ENCODE measurements at regions of chr19 and their contacts with region 1.

Region 1: DNA sequence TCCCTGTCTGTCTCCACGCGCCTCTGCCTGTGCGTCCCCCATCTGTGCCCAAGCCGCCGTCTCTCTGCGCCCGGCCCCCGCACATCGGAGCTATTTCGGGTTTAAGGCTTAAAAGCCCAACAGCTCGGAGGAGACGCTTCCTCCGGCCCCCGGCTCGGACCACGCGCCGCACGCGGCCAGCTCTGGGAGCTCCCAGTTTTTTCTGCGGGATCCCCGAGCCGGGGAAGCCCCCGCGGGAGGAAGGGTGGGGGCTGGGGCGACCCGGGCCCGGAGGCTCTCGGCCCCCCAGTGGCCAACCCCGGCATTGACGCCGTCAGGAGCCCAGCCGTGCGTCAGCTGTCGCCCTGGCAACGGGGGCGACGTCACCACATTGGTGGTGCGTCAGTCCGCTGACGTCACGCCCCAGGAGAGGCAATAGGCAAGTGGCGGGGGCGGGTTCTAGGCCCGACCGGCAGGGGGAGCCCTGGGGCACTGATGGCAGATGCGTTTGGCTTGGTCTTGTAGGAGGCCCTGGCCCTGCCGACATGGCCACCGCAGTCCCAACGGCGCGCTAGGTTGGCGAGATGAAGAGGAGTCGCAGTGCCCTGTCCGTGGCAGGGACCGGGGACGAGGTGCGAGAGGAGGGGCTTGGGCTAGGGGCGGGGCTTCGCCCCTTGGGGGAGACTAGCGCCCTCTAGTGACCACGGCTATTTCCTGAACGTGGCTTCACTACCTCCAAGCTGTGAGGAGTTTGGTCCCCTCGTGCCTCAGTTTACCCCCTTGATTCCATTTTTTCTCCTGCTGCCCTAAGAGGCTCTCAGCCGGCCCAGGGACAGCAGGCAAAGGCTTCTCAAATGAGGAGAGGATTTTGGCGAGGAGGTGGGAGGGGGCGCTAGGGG is 3.7 kb upstream of the PDE4A start:
- DNase-seq: peak; percentile 98
- ATAC-seq: peak; percentile 48
- H3K4me3 Mint-ChIP-seq: peak overlapping the region; percentile 76
- H3K27ac Mint-ChIP-seq: peak overlapping the region; percentile 95
- H3K4me1 Mint-ChIP-seq: peaks cover 61% of the 10 kb centered on the region
- H3K27me3 Mint-ChIP-seq: peaks cover 4% of the 10 kb centered on the region

Region 2: GRCh38 chr19:10353793-10354391 is 62.7 kb before region 1 on chr19:
- CTCF ChIA-PET with region 1: no interaction called
- DNase-seq: peak; percentile 54
- ATAC-seq: peak; percentile 53
- H3K4me3 Mint-ChIP-seq: no peak overlapping the region
- H3K27ac Mint-ChIP-seq: no peak overlapping the region
- H3K4me1 Mint-ChIP-seq: no peaks in the 10 kb centered on the region
- H3K27me3 Mint-ChIP-seq: no peaks in the 10 kb centered on the region

Region 3: GRCh38 chr19:10431943-10432735 is 15.5 kb after region 1 on chr19:
- CTCF ChIA-PET with region 1: interaction called, 1,020 read pairs
- DNase-seq: peak; percentile 75
- ATAC-seq: peak; percentile 49
- H3K4me3 Mint-ChIP-seq: peak overlapping the region; percentile 80
- H3K27ac Mint-ChIP-seq: peak overlapping the region; percentile 96
- H3K4me1 Mint-ChIP-seq: peaks cover 75% of the 10 kb centered on the region
- H3K27me3 Mint-ChIP-seq: peaks cover 6% of the 10 kb centered on the region

Region 4: DNA sequence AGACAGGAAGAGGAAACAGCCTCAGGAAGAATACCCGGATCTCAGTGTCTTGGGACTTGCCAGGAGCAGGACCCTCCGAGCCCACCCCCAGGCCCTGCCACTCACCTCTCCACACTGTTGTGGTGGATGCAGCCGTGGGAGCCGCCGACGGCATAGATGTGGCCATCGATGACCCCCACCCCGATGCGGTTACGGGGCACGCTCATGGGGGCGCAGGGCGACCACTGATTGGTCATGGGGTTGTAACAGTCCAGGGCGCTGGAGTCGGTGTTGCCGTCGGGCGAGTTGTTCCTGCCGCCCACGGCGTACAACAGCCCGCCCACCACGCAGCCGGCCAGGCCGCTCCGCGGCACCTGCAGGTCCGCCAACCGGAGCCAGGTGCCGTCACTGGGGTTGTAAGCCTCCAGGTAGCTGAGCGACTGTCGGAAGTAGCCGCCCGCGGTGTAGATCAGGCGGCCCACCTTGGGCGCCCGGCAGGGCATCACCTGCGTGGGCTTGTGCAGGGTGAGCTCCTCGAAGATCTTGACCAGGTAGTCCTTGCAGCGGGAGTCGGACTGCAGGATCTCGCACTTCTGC is 74.9 kb after region 1 on chr19:
- CTCF ChIA-PET with region 1: no interaction called
- DNase-seq: no peak
- ATAC-seq: no peak
- H3K4me3 Mint-ChIP-seq: no peak overlapping the region
- H3K27ac Mint-ChIP-seq: no peak overlapping the region
- H3K4me1 Mint-ChIP-seq: peaks cover 10% of the 10 kb centered on the region
- H3K27me3 Mint-ChIP-seq: no peaks in the 10 kb centered on the region